T-cell (primary cell): ENCODE measurements at regions of chr1 and their contacts with region 1.

Region 1: GRCh38 chr1:234853906-234854644 is 244.1 kb upstream of the IRF2BP2 start:
- DNase-seq: no peak
- ATAC-seq: no peak
- H3K4me3 ChIP-seq: no peak overlapping the region
- H3K4me3 Mint-ChIP-seq: no peak overlapping the region
- H3K27ac ChIP-seq: no peak overlapping the region
- H3K27ac Mint-ChIP-seq: no peak overlapping the region
- H3K4me1 ChIP-seq: peaks cover 4 to 9% of the 10 kb centered on the region in 2 experiments
- H3K4me1 Mint-ChIP-seq: peaks cover 25 to 29% (median 25%) of the 10 kb centered on the region in 3 donors
- H3K27me3 ChIP-seq: peaks cover 0 to 2% of the 10 kb centered on the region in 2 experiments
- H3K27me3 Mint-ChIP-seq: no peaks in the 10 kb centered on the region

Region 2: DNA sequence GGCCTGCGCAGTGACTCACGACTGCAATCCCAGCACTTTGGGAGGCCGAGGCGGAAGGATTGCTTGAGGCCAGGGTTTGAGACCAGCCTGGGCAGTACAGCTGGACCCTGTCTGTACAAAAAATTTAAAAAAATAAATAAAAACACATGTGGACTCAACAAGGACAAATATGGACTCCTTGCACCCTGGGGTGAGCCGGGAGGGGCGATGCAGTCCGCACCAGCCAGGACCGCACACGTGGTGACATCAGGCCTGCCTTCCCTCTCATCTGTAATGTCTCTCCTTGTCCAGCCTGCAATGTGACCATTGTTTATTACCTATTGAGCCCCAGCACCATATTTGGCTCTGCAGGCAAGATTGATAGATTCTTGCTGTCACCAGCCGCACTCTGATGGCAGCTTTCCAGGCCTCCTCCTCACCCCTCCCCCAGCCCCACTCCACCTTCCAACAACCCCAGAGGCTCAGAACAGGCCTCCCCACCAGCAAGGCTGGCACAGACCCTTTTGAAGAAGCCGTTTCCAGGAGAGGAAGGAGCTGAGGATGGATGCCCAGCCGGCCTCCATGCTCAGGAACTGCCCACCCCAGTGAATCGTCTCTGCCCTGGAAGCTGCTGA is 299.3 kb before region 1 on chr1:
- CTCF ChIA-PET with region 1: no interaction called
- POLR2A ChIA-PET with region 1: no interaction called
- DNase-seq: no peak
- ATAC-seq: no peak
- H3K4me3 ChIP-seq: no peak overlapping the region
- H3K4me3 Mint-ChIP-seq: no peak overlapping the region
- H3K27ac ChIP-seq: no peak overlapping the region
- H3K27ac Mint-ChIP-seq: no peak overlapping the region
- H3K4me1 ChIP-seq: no peaks in the 10 kb centered on the region
- H3K4me1 Mint-ChIP-seq: no peaks in the 10 kb centered on the region
- H3K27me3 ChIP-seq: peaks cover 0 to 9% of the 10 kb centered on the region in 2 experiments
- H3K27me3 Mint-ChIP-seq: no peaks in the 10 kb centered on the region

Region 3: GRCh38 chr1:234978397-234979295 is 124.6 kb after region 1 on chr1:
- CTCF ChIA-PET with region 1: no interaction called
- POLR2A ChIA-PET with region 1: interaction called in 1 of 2 experiments, 21 read pairs
- DNase-seq: peak in 33 of 35 experiments; percentile 14 to 77 (median 45)
- ATAC-seq: peak; percentile 51 to 81 (median 58)
- H3K4me3 ChIP-seq: no peak overlapping the region
- H3K4me3 Mint-ChIP-seq: peak overlapping the region; percentile 21 to 75 (median 52)
- H3K27ac ChIP-seq: peak overlapping the region; percentile 94
- H3K27ac Mint-ChIP-seq: peak overlapping the region; percentile 90 to 97
- H3K4me1 ChIP-seq: peaks cover 25 to 42% of the 10 kb centered on the region in 2 experiments
- H3K4me1 Mint-ChIP-seq: peaks cover 41 to 79% (median 57%) of the 10 kb centered on the region in 3 donors
- H3K27me3 ChIP-seq: no peaks in the 10 kb centered on the region
- H3K27me3 Mint-ChIP-seq: no peaks in the 10 kb centered on the region